ENCODE measurements at regions of chr12 and their contacts with region 1.

Region 1: GRCh38 chr12:122793685-122794106 is 19.3 kb downstream of the CCDC62 start:
- DNase-seq: peak; percentile 74
- H3K4me3 ChIP-seq: no peak overlapping the region
- H3K27ac ChIP-seq: no peak overlapping the region
- H3K4me1 ChIP-seq: no peaks in the 10 kb centered on the region; a peak in 1 of 4 replicates
- H3K27me3 ChIP-seq: no peaks in the 10 kb centered on the region
- CTCF ChIP-seq: peak; percentile 78
- EP300 ChIP-seq: no peak
- RAD21 ChIP-seq: peak; percentile 82

Region 2: GRCh38 chr12:122651520-122652224 is 142.0 kb before region 1 on chr12:
- CTCF ChIA-PET with region 1: no interaction called
- POLR2A ChIA-PET with region 1: no interaction called
- DNase-seq: no peak
- H3K4me3 ChIP-seq: no peak overlapping the region
- H3K27ac ChIP-seq: no peak overlapping the region
- H3K4me1 ChIP-seq: no peaks in the 10 kb centered on the region
- H3K27me3 ChIP-seq: no peaks in the 10 kb centered on the region
- CTCF ChIP-seq: no peak
- EP300 ChIP-seq: no peak
- RAD21 ChIP-seq: no peak

Region 3: DNA sequence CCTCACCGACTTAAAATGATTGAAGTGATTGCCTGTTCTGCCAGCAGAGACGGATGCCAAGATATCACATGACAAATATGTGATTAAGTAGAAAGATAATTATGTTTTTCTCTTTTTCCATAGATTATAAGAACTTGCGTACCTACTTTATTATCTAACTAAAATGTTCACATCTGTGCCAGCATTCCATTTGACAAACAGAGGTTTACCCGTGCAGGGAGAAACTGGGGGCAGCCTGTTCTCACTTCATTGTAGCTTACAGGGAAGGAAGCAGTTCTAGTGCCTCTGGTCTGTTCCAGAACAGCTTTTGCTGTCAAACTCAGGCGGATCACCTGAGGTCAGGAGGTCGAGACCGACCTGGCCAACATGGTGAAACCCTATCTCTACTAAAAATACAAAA is 10.2 kb after region 1 on chr12:
- CTCF ChIA-PET with region 1: interaction called, 48 read pairs
- POLR2A ChIA-PET with region 1: no interaction called
- DNase-seq: no peak
- H3K4me3 ChIP-seq: no peak overlapping the region
- H3K27ac ChIP-seq: no peak overlapping the region
- H3K4me1 ChIP-seq: no peaks in the 10 kb centered on the region
- H3K27me3 ChIP-seq: no peaks in the 10 kb centered on the region
- CTCF ChIP-seq: no peak
- EP300 ChIP-seq: no peak
- RAD21 ChIP-seq: no peak

Region 4: GRCh38 chr12:122834104-122834920 is 40.6 kb after region 1 on chr12:
- CTCF ChIA-PET with region 1: interaction called, 38 read pairs
- POLR2A ChIA-PET with region 1: no interaction called
- DNase-seq: peak; percentile 83
- H3K4me3 ChIP-seq: peak overlapping the region; percentile 68 to 72
- H3K27ac ChIP-seq: peak overlapping the region; percentile 55 to 89; a peak in 3 of 4 replicates
- H3K4me1 ChIP-seq: peaks cover 7 to 8% of the 10 kb centered on the region in 2 experiments; a peak in 2 of 4 replicates
- H3K27me3 ChIP-seq: no peaks in the 10 kb centered on the region
- CTCF ChIP-seq: peak; percentile 11; the same call in 1 of the 2 replicates
- EP300 ChIP-seq: no peak
- RAD21 ChIP-seq: peak; percentile 37

Region 5: DNA sequence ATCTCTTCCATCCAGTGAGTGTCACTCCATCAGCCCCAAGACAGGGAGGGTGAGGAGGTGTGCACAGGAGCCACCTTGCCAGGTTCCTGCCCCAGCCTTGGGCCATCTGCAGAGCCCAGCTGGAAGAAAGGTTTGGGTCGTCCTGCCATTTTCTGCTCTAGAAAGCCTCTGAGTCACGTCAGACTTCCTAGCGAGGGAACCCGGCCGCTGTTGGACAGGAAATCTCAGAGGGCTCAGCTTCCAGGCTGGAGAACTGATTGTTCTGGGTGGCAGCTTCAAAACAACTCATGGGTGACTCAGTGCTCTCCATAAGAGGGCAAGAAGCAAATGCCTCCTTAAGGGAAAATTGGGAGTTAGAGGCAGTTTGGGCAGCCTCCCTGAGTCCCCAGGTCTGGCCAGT is 58.1 kb after region 1 on chr12:
- CTCF ChIA-PET with region 1: interaction called, 37 read pairs
- POLR2A ChIA-PET with region 1: no interaction called
- DNase-seq: peak; percentile 20
- H3K4me3 ChIP-seq: no peak overlapping the region
- H3K27ac ChIP-seq: peak overlapping the region; percentile 58; a peak in 3 of 4 replicates
- H3K4me1 ChIP-seq: peaks cover 10 to 30% of the 10 kb centered on the region in 2 experiments; a peak in 2 of 4 replicates
- H3K27me3 ChIP-seq: no peaks in the 10 kb centered on the region
- CTCF ChIP-seq: no peak
- EP300 ChIP-seq: no peak
- RAD21 ChIP-seq: no peak

Region 6: GRCh38 chr12:122865268-122866231 is 71.9 kb after region 1 on chr12:
- CTCF ChIA-PET with region 1: interaction called, 17 read pairs
- POLR2A ChIA-PET with region 1: no interaction called
- DNase-seq: peak; percentile 79
- H3K4me3 ChIP-seq: no peak overlapping the region
- H3K27ac ChIP-seq: peak overlapping the region in 1 of 2 experiments; percentile 22; a peak in 1 of 4 replicates
- H3K4me1 ChIP-seq: peaks cover 0 to 16% of the 10 kb centered on the region in 2 experiments; a peak in 1 of 4 replicates
- H3K27me3 ChIP-seq: no peaks in the 10 kb centered on the region
- CTCF ChIP-seq: peak; percentile 54
- EP300 ChIP-seq: no peak
- RAD21 ChIP-seq: peak; percentile 36

Region 7: GRCh38 chr12:122928404-122929147 is 134.9 kb after region 1 on chr12:
- CTCF ChIA-PET with region 1: no interaction called
- POLR2A ChIA-PET with region 1: no interaction called
- DNase-seq: no peak
- H3K4me3 ChIP-seq: no peak overlapping the region
- H3K27ac ChIP-seq: no peak overlapping the region
- H3K4me1 ChIP-seq: no peaks in the 10 kb centered on the region
- H3K27me3 ChIP-seq: no peaks in the 10 kb centered on the region
- CTCF ChIP-seq: no peak
- EP300 ChIP-seq: no peak
- RAD21 ChIP-seq: no peak

Region 8: GRCh38 chr12:122951979-122952892 is 158.5 kb after region 1 on chr12:
- CTCF ChIA-PET with region 1: interaction called, 70 read pairs
- POLR2A ChIA-PET with region 1: no interaction called
- DNase-seq: peak; percentile 36
- H3K4me3 ChIP-seq: no peak overlapping the region; a peak in 1 of 4 replicates
- H3K27ac ChIP-seq: peak overlapping the region in 1 of 2 experiments; percentile 57; a peak in 1 of 4 replicates
- H3K4me1 ChIP-seq: 0 out of 4 replicates have a peak, but pooled peaks cover 0 to 11% of the 10 kb centered on the region in 2 experiments
- H3K27me3 ChIP-seq: no peaks in the 10 kb centered on the region
- CTCF ChIP-seq: peak; percentile 83
- EP300 ChIP-seq: no peak
- RAD21 ChIP-seq: peak; percentile 98

Region 9: DNA sequence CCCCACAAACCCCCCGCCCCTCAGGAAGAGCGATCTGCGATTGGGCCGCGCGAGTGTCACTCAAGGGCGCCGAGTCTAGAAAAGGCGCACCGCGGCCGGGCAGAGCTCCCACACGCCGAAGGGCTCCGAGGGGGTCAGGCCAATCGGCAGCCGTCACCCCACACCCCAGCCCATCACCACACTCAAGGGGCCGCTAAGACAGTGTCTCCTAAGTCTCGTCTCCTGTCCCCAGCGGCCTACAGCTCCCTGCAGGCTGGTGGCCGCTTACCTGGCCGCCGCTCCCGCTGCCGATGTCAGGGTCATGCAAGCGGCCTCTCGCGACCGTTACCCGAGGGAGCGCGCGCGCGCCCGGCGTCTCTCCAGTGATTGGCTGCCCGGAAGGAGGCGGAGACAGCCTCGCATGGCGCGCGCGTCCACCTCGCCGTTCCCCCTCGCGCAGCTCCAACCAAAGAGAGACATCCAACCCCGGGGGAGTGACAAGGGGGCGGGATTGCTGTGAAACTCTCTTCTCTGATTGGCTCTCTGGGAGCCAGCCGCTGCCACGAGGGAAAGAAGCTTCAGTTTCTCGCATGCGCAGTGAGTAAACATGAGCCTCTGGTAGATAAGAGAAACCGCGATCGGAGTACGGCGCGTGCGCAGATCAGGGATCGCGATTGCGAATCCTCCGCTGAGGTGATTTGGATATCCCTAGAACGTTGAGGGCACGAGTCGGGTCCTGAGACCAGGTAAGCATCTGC is 439.3 kb after region 1 on chr12 and contains the starts of genes MPHOSPH9 and MTRFR:
- CTCF ChIA-PET with region 1: interaction called, 10 read pairs
- POLR2A ChIA-PET with region 1: no interaction called
- DNase-seq: peak; percentile 95
- H3K4me3 ChIP-seq: peak within 1 kb of the TSS; percentile 76 to 100
- H3K27ac ChIP-seq: peak within 1 kb of the TSS; percentile 76 to 83
- H3K4me1 ChIP-seq: peaks cover 4 to 14% of the 10 kb centered on the region in 2 experiments; a peak in 3 of 4 replicates
- H3K27me3 ChIP-seq: no peaks in the 10 kb centered on the region
- CTCF ChIP-seq: no peak
- EP300 ChIP-seq: no peak
- RAD21 ChIP-seq: no peak
- polyA plus RNA-seq, gene MPHOSPH9: 8.2 and 9.0 TPM in 2 replicates
- polyA plus RNA-seq, gene MTRFR: 6.6 and 7.5 TPM in 2 replicates

Measured in SK-N-SH (cell line).